Gastrocnemius medialis (tissue), 4 donors: ENCODE measurements at regions of chr5 and their contacts with region 1.

Region 1: DNA sequence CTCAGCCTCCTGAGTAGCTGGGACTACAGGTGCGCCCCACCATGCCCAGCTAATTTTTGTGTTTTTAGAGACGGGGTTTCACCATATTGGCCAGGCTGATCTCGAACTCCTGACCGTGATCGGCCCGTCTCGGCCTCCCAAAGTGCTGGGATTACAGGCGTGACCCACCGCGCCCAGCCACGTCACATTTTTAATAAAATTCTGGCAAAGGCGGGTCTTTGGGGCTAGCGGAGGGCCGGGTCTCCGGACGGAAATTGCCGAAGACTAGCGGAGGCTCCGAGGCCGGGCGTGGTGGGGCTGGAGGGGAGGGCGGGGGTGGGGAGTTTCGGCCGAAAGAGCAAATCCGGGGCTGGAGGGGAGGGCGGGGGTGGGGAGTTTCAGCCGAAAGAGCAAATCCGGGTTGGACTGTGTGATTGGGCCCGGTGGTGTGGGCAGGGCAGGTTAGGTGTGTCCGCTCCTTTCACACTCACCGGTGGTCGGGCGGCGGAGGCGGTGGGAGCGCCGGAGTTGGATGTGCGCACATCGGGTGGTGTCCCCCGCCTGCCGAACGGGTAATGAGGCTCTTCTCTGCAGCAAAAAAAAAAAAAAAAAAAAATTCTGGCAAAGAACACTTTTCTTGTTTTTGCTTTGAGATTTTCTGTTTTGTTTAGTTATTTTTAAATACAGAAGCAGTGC is 27.1 kb downstream of the RUFY1 start:
- DNase-seq: no peak
- ATAC-seq: no peak
- H3K4me3 ChIP-seq: no peak overlapping the region
- H3K27ac ChIP-seq: no peak overlapping the region
- H3K4me1 ChIP-seq: no peaks in the 10 kb centered on the region
- H3K27me3 ChIP-seq: no peaks in the 10 kb centered on the region
- CTCF ChIP-seq: no peak
- POLR2A ChIP-seq: no peak

Region 2: DNA sequence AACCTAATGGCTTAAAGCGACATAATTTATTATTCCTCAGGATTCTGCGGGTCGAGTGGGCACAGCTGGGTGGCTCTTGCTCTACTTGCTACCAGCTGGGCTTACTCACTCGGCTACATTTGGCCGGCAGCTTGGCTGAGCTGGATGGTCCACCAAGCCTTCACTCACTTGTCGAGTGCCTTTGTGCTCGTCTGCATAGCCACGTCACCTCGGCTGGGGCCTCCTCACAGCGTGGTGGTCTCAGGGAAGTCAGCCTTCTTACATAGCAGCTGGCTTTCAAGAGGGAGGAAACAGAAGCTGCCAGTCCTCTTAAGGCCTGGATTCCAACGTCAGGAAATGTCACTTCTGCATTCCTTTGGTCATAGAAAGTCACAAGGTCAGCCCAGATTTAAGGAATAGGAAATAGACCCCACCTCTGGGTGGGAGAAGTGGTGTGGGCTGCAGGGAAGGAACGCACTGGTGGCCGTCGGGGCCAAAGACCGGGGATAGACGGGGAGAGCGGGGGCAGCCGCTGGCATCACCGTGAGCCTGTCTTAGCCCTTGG is 102.1 kb before region 1 on chr5:
- in situ Hi-C with region 1: no loop called
- intact Hi-C with region 1: no loop called
- DNase-seq: no peak
- ATAC-seq: no peak
- H3K4me3 ChIP-seq: no peak overlapping the region
- H3K27ac ChIP-seq: no peak overlapping the region
- H3K4me1 ChIP-seq: no peaks in the 10 kb centered on the region
- H3K27me3 ChIP-seq: no peaks in the 10 kb centered on the region
- CTCF ChIP-seq: no peak
- POLR2A ChIP-seq: no peak

Region 3: DNA sequence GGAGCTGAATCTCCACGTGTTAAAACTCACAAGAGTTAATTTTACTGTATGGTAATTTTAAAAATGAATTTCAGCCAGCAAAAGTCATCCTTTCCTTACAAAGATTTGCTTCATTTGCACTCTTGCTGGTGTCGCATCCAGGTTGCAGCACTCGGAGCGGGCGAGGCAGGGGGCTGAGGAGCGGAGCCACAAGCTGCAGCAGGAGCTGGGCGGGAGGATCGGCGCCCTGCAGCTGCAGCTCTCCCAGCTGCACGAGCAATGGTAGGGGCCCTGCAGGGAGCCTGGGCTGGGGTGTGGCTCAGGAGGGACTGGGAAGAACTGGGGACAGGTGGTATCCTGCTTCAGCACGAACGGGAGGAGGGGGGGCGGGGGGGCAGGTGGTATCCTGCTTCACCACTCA is 19.0 kb after region 1 on chr5:
- in situ Hi-C with region 1: no loop called
- intact Hi-C with region 1: loop called (anchors 1 kb)
- DNase-seq: no peak
- ATAC-seq: peak in 1 of 2 donors; percentile 24
- H3K4me3 ChIP-seq: no peak overlapping the region
- H3K27ac ChIP-seq: no peak overlapping the region
- H3K4me1 ChIP-seq: no peaks in the 10 kb centered on the region
- H3K27me3 ChIP-seq: no peaks in the 10 kb centered on the region
- CTCF ChIP-seq: no peak
- POLR2A ChIP-seq: no peak